ENCODE measurements at regions of chr20 and their contacts with region 1.

Region 1: DNA sequence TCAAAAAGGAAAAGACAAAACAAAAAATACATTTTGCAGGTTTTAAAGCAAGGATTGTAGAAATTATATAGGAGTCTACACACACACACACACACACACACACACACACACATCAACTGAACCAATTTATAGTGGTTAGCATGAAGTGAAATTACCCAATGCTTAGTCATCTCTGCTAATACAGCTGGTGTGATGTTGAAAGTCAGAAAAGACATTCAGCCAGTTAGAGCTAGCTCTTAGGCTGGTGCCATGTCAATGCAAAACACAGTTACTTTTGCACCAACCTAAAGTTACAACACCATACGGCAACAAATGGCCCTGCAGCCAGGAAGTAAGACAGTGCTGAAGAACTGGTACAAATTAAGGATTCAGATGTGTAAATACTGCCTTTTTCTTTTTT is 15.2 kb downstream of the FAM210B start:
- H3K4me3 ChIP-seq: no peak overlapping the region
- H3K27ac ChIP-seq: no peak overlapping the region
- H3K4me1 ChIP-seq: no peaks in the 10 kb centered on the region
- CTCF ChIP-seq: no peak

Region 2: GRCh38 chr20:56322681-56323080 is 51.3 kb before region 1 on chr20:
- CTCF ChIA-PET with region 1: no interaction called
- POLR2A ChIA-PET with region 1: no interaction called
- H3K4me3 ChIP-seq: no peak overlapping the region
- H3K27ac ChIP-seq: no peak overlapping the region
- H3K4me1 ChIP-seq: no peaks in the 10 kb centered on the region
- CTCF ChIP-seq: no peak

Region 3: DNA sequence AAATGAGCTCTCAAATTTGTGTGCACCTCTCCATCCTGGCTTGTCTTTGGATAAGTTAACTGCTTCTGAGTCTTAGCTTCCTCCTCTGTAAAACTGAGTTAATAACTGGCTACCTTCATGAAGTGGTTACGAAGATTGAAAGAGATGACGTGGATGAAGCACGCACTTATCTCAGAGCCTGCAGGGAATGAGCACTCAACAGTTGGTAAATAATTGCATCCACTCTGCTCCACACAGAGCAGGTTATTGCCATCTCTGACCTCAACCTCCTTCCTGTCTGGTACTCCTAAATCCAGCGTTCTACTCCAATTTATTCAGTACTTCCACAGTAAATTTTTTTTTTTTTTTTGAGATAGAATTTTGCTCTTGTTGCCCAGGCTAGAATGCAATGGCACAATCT is 11.2 kb after region 1 on chr20:
- CTCF ChIA-PET with region 1: interaction called, 13 read pairs
- POLR2A ChIA-PET with region 1: interaction called, 3 read pairs
- H3K4me3 ChIP-seq: no peak overlapping the region
- H3K27ac ChIP-seq: no peak overlapping the region
- H3K4me1 ChIP-seq: no peaks in the 10 kb centered on the region
- CTCF ChIP-seq: no peak